ENCODE measurements at regions of chr11 and their contacts with region 1.

Region 1: GRCh38 chr11:96267496-96268032 is 75.4 kb downstream of the MAML2 start:
- DNase-seq: no peak
- ATAC-seq: peak; percentile 98
- H3K4me3 Mint-ChIP-seq: peak overlapping the region; percentile 73
- H3K27ac Mint-ChIP-seq: peak overlapping the region; percentile 89
- H3K4me1 Mint-ChIP-seq: peaks cover 70% of the 10 kb centered on the region
- H3K27me3 Mint-ChIP-seq: no peaks in the 10 kb centered on the region
- CTCF ChIP-seq: no peak

Region 2: DNA sequence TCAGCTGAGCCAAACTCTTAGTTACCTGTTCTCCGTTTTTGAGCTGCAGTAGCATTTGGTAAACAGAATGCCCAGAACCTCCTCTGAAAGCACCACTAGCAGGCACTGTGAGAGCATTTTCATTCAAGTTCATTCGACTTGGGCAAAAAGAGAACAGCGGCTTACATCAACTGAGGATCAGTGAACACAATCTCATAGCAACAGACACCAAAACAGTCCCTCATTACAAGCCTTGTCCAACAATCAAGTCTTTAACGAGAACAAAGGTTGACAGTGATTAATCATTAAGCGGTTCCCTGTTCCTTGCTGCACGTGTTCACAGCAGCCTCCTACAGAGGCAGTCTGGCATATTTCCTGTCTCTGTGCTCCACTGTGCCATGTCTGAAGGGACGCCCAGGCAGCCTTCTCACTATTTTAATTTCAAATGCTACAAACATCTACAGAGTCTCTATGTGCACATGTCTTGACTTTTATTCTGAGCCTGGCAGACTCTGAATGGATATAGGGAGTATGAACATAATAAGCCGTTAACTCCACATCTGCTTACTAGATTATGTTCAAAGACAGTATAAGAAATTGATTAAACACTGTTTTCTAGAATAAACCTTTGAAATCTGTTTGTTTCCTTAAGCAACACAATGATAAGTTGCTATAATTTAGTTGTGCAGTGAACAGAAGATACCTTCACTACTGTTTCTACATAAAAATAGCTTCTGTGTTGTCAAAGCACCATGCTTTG is 255.3 kb before region 1 on chr11:
- CTCF ChIA-PET with region 1: interaction called, 3 read pairs
- POLR2A ChIA-PET with region 1: no interaction called
- intact Hi-C with region 1: loop called (anchors 1 kb)
- DNase-seq: peak; percentile 21
- ATAC-seq: peak; percentile 91
- H3K4me3 Mint-ChIP-seq: peak overlapping the region; percentile 46
- H3K27ac Mint-ChIP-seq: peak overlapping the region; percentile 85
- H3K4me1 Mint-ChIP-seq: peaks cover 44% of the 10 kb centered on the region
- H3K27me3 Mint-ChIP-seq: no peaks in the 10 kb centered on the region
- CTCF ChIP-seq: no peak

Region 3: GRCh38 chr11:96197801-96198701 is 69.5 kb before region 1 on chr11:
- CTCF ChIA-PET with region 1: no interaction called
- POLR2A ChIA-PET with region 1: no interaction called
- intact Hi-C with region 1: loop called (anchors 2 kb)
- DNase-seq: no peak
- ATAC-seq: peak; percentile 87
- H3K4me3 Mint-ChIP-seq: peak overlapping the region; percentile 48
- H3K27ac Mint-ChIP-seq: peak overlapping the region; percentile 78
- H3K4me1 Mint-ChIP-seq: peaks cover 64% of the 10 kb centered on the region
- H3K27me3 Mint-ChIP-seq: no peaks in the 10 kb centered on the region
- CTCF ChIP-seq: no peak

Region 4: DNA sequence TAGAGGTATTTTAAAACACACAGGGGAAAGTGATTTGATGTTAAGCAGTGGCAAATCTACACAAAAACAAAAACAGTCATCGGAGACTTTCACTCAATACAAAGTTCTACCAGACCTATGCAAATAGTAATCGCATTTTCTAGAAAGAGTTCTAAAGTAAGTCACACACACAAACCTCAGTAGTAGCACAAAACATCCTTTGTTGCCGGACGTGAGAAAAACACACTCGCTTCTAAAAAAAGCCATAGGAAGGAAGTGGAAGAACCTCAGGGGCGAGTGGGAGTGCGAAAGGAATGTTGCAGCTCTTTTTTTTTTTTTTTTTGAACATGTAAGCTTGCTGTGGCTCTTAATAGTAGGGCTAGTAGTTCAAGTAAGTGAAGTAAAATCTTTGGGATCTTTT is 13.5 kb before region 1 on chr11:
- CTCF ChIA-PET with region 1: interaction called, 3 read pairs
- POLR2A ChIA-PET with region 1: interaction called, 19 read pairs
- intact Hi-C with region 1: loop called (anchors 1 kb)
- DNase-seq: no peak
- ATAC-seq: no peak
- H3K4me3 Mint-ChIP-seq: peak overlapping the region; percentile 73
- H3K27ac Mint-ChIP-seq: peak overlapping the region; percentile 99
- H3K4me1 Mint-ChIP-seq: peaks cover 82% of the 10 kb centered on the region
- H3K27me3 Mint-ChIP-seq: no peaks in the 10 kb centered on the region
- CTCF ChIP-seq: no peak

Region 5: DNA sequence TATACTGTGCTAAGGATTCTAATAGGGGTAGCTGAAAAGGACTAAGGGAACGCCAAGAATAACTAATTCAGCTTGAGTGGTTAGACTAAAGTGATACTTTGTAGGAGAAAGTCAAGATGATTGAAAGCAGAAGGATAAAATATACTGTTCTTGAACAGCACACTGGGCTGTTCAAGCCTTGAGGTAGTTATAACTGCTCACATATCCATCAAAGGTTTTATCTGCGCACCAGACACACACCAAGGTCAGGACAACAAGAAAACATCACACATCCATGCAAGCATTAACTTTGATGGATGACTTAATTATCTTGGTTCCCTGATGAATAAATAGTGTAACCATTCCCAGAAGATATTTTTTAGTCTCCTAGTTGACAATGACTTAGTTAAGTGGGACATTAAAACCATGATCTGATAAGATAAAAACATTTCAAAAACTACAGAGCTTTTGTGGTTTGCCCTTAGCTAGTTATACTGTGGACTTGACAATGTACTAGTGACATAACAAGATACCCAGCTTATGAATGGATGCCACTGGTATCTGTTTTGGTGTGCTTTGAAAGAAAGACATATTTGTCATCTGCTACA is 851.1 kb after region 1 on chr11:
- CTCF ChIA-PET with region 1: no interaction called
- POLR2A ChIA-PET with region 1: no interaction called
- intact Hi-C with region 1: no loop called
- DNase-seq: no peak
- ATAC-seq: no peak
- H3K4me3 Mint-ChIP-seq: no peak overlapping the region
- H3K27ac Mint-ChIP-seq: no peak overlapping the region
- H3K4me1 Mint-ChIP-seq: no peaks in the 10 kb centered on the region
- H3K27me3 Mint-ChIP-seq: no peaks in the 10 kb centered on the region
- CTCF ChIP-seq: no peak